Vagina (tissue), 2 donors: ENCODE measurements at regions of chr5 and their contacts with region 1.

Region 1: DNA sequence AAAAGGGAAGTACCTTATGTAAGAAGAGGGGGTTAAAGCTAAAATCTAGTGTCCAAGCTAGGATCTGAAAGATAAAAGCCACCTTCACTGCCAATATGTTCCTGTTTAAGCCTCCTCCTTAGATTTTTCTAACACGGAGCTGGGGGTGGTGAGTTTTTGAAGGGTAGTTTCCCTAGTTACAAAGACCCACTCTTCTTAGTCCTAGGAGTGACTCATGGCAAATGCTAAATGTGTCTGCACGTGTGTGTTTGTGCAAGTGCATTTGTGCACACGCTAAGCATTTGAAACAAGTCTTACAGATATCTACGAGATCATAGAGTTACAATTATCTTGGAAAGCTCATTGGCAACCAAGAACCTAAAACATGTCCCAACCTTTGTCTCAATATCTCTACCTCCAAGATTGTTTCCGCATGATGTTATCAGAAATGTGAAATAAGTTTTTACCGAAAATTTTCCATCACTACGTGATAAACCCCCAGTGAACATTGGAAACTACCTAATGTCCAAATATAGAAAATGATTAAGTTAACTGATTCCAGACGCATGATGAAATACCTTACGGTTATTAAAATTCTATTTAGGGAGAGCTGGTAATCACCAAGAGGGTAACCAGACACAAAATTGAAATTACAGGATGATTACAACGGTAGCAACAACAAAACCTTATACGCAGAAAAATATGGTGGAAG is 78.0 kb upstream of the HRH2 start:
- DNase-seq: no peak
- H3K4me3 ChIP-seq: no peak overlapping the region
- H3K27ac ChIP-seq: no peak overlapping the region
- H3K4me1 ChIP-seq: no peaks in the 10 kb centered on the region
- H3K27me3 ChIP-seq: no peaks in the 10 kb centered on the region
- CTCF ChIP-seq: no peak
- POLR2A ChIP-seq: no peak

Region 2: DNA sequence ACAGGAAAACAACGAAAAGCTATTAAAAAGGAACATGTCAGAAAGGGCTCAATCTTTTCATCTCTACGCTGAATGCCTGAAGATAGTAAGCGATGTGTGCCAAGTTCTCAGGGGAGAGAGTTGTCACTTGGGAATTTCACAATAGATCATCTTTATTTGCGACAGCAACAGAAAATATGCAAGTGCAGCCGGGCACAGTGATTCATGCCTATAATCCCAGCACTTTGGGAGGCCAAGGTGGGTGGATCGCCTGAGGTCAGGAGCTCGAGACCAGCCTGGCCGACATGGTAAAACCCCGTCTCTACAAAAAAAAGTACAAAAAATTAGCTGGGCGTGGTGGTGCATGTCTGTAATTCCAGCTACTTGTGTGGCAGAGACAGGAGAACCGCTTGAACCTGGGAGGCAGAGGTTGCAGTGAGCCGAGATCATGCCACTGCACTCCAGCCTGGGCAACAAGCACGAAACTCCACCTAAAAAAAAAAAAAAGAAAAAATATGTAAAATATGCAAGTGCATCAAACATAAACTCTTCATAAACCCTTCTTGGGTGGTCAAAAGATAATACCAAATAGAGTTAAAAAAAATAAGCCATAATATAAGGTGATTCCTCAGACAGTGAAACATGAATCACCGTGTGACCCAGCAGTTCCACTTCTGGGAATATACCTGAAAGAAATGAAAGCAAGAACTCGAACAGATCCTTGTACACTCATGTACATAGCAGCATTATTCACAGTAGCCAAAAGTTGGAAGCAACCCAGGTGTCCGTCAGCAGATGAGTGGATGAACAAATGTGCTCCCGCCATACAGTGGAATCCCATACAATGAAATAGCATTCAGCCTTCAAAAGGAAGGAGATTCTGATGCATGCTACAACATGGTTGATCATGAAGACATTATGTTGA is 85.4 kb before region 1 on chr5:
- intact Hi-C with region 1: no loop called
- DNase-seq: no peak
- H3K4me3 ChIP-seq: no peak overlapping the region
- H3K27ac ChIP-seq: peak overlapping the region; percentile 14
- H3K4me1 ChIP-seq: peaks cover 15% of the 10 kb centered on the region
- H3K27me3 ChIP-seq: no peaks in the 10 kb centered on the region
- CTCF ChIP-seq: no peak
- POLR2A ChIP-seq: no peak

Region 3: GRCh38 chr5:175548626-175549311 is 31.1 kb before region 1 on chr5:
- intact Hi-C with region 1: no loop called
- DNase-seq: no peak
- H3K4me3 ChIP-seq: no peak overlapping the region
- H3K27ac ChIP-seq: no peak overlapping the region
- H3K4me1 ChIP-seq: no peaks in the 10 kb centered on the region
- H3K27me3 ChIP-seq: no peaks in the 10 kb centered on the region
- CTCF ChIP-seq: no peak
- POLR2A ChIP-seq: no peak

Region 4: GRCh38 chr5:175591293-175591692 is 11.4 kb after region 1 on chr5:
- intact Hi-C with region 1: loop called (anchors 1 kb)
- DNase-seq: no peak
- H3K4me3 ChIP-seq: no peak overlapping the region
- H3K27ac ChIP-seq: no peak overlapping the region
- H3K4me1 ChIP-seq: no peaks in the 10 kb centered on the region
- H3K27me3 ChIP-seq: no peaks in the 10 kb centered on the region
- CTCF ChIP-seq: no peak
- POLR2A ChIP-seq: no peak